RWPE1 (cell line): ENCODE measurements at regions of chr11 and their contacts with region 1.

Region 1: GRCh38 chr11:62542750-62543567 is 3.6 kb downstream of the AHNAK start:
- DNase-seq: peak; percentile 67
- H3K27ac ChIP-seq: peak overlapping the region; percentile 100
- CTCF ChIP-seq: peak; percentile 97

Region 2: DNA sequence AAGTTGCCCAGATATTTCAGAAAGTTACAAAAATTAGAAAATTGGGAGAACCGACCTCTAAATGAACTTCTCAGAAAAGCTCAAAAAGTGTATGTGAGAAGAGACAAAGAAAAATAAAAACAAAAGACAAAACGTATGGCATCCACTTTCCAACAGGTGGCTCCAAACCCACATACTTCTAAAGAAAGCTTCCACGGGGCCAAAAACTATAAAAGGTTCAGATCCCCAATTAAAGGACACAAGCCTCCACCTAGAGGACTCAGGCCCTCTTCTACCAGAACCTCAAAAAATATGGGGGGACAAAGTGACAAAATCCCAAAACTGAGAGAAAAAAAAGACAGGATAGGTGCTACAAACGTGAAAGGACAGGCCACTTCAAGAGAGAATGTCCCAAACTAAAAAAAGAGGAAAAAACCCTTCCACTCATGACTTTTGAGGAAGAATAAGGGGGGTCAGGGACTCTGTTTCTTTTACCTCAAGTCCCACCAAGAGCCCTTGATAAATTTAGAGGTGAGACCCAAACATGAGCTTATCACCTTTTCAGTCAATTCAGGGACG is 325.7 kb before region 1 on chr11:
- CTCF ChIA-PET with region 1: interaction called, 11 read pairs
- POLR2A ChIA-PET with region 1: no interaction called
- DNase-seq: peak; percentile 37
- H3K27ac ChIP-seq: no peak overlapping the region
- CTCF ChIP-seq: peak; percentile 45

Region 3: DNA sequence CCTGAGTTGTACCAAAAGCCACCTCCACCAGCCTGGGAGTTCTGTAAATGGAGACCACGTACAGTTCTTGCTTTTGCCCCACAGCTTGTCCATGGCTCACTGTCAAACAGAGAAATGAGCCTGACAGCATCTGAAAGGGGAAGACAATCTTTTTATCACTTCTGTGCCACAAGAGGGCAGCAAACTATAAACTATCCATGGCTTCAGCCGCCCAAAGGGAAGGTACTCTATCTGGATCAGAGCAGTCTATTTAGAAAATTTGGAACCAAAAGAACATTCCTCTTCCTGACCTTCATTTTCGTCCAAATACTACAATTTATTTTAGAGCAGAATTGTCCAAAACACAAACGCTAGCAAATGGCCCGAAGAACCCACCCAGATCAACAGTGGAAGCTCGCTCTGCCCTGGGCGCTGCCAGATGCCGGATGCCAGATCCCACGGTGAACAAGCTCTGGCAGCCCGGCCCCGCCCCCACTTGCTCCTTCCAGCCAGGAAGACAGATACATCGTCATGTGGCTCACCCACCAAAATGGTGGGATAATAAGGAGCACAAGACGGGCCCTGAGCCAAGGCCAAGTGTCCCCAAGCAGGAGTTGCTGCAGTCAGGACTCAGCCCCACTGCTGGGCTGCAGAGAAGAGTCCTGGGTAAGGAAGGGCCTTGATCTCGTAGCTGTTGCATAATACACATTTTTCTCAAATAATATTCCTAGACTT is 148.0 kb before region 1 on chr11:
- CTCF ChIA-PET with region 1: interaction called, 20 read pairs
- POLR2A ChIA-PET with region 1: interaction called, 3 read pairs
- DNase-seq: peak; percentile 87
- H3K27ac ChIP-seq: peak overlapping the region; percentile 81
- CTCF ChIP-seq: peak; percentile 65

Region 4: GRCh38 chr11:62427630-62428233 is 115.2 kb before region 1 on chr11:
- CTCF ChIA-PET with region 1: interaction called, 33 read pairs
- POLR2A ChIA-PET with region 1: no interaction called
- DNase-seq: no peak
- H3K27ac ChIP-seq: peak overlapping the region; percentile 40; the same call in 1 of the 2 replicates
- CTCF ChIP-seq: no peak

Region 5: DNA sequence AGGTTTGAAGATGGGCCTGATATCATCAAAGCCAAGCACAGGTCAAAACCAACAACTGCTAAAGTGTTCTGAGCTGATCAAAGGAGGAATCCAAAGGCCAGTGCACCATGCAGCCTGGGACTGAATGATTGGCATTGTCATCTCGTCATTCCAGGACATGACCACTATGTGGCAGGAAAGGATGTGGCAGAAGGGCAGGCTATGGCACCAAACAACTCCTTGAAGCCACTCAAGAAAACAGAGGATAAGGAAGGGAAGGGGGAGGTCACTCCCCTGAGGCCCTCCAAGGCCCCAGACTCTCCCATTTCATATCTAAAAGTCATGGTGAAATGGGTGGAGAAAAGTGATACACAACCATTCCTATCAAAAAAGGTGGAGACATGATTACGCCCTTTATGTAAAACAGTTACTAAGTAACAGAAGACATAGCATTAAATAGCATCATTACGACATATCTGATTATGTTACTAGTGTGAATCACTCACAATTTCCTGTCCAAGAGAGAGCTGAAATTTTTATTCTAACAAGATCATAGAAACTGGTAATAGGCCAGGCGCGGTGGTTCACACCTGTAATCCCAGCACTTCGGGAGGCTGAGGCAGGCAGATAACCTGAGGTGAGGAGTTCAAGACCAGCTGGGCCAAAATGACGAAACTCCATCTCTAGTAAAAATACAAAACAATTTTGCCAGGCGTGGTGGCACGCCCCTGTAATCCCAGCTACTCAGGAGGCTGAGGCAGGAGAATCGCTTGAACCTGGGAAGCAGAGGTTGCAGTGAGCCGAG is 45.6 kb before region 1 on chr11:
- CTCF ChIA-PET with region 1: interaction called, 13 read pairs
- POLR2A ChIA-PET with region 1: no interaction called
- DNase-seq: peak; percentile 76
- H3K27ac ChIP-seq: peak overlapping the region; percentile 76
- CTCF ChIP-seq: peak; percentile 61; the same call in 1 of the 2 replicates

Region 6: DNA sequence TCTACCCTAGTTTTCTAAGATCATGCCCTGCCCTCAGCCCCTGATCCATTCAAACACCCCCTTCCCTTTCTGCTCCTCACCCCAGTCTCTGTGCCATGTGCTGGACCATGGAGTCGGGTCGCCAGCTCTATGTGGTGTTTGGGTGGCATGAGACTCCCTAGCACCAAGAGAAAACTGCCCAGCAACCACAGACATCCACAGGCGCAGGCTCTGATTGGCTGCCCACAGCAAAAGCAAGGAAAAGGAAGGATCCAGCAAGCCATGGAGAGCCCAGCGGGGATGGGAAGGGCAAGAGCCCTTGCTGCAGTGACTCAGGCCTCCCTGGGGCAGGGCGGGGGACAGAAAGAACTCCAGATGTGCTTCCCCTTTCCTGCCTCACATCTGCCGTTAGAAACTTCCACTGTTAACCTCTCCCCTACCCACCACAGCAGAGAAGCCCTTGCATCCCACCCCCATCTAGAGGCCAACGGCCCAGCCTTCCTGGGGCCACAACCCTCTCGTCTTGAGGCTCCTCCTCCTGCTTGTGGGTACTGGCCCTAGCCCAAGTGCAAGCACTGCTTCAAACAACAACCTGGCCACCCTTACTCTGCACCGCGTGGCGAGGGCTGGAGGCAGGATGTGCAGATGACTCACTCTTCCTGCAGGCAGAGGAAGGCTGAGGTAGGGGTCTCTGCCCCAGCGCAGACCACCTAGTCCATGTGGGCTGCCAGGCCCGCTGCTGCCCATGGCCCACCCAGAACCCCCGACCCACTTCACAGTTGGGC is 13.3 kb after region 1 on chr11:
- CTCF ChIA-PET with region 1: interaction called, 74 read pairs
- POLR2A ChIA-PET with region 1: interaction called, 11 read pairs
- DNase-seq: peak; percentile 99
- H3K27ac ChIP-seq: peak overlapping the region; percentile 100
- CTCF ChIP-seq: no peak